Head of caudate nucleus (tissue), 42 donors: ENCODE measurements at regions of chr6 and their contacts with region 1.

Region 1: DNA sequence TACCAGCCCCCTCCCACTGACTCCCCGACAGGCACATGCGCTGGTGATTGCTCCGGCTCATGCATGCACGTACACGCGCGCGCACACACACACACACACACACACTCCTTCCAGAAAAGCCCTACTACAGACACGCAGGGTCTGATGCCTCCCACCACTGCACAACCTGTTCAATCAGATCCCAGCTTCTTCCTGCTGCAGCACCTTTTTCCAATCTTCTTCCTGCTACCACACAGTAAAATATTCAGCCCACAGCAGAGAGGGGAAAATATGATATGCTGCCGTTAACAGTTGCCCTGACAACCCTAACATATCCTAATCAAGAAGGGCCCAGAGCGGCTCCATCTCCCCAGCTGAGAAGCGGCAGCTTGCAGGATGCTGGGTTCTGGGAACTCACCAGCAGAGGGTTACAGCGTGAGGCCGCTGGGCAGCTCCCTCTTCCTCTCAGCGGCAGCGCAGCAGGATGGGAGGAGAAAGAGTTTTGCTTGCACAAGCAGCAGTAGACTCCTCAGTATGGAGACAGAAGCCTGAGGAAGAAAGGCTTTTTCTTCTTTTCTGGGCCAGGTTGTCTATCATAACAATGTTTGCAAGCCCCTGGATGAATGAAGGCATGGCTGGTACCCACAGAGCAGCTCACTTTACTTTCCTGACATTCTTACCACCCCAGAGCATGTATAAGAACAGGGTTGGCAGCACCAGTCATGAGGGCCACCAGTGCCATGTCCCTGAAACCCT is 23.9 kb downstream of the MAP7 start:
- DNase-seq: peak; percentile 71 to 96 (median 87)

Region 2: GRCh38 chr6:136439514-136440190 is 86.7 kb before region 1 on chr6:
- intact Hi-C with region 1: no loop called
- DNase-seq: peak in 4 of 42 donors; percentile 25 to 60 (median 44)

Region 3: DNA sequence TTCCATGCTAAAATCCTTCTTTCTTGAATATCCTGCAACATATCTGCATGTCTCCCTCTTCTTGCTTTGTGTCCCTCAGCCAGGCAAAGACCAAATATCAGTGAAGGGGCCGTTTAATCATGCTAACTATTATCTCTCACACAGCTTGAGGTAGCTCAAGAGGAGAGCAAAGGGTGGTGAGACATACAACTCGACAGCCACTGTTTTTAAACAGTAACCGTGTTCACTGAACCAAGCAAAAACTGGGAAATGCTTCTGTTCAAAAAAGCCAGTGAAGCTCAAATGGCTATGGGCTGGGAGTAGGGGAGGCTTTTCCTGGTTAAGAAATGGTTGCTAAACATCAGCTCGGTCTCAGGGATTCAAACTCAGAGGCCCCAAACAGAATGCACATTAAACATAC is 59.6 kb before region 1 on chr6:
- intact Hi-C with region 1: loop called (anchors 5 kb)
- DNase-seq: no peak